ENCODE measurements at regions of chr1 and their contacts with region 1.

Region 1: GRCh38 chr1:164716992-164717703 is 158.2 kb downstream of the PBX1 start:
- DNase-seq: no peak
- ATAC-seq: no peak
- H3K4me3 ChIP-seq: no peak overlapping the region
- H3K27ac ChIP-seq: no peak overlapping the region
- H3K4me1 ChIP-seq: no peaks in the 10 kb centered on the region
- H3K27me3 ChIP-seq: no peaks in the 10 kb centered on the region; the same call in 1 of the 2 replicates
- CTCF ChIP-seq: no peak

Region 2: GRCh38 chr1:164755695-164756094 is 38.5 kb after region 1 on chr1:
- CTCF ChIA-PET with region 1: no interaction called
- POLR2A ChIA-PET with region 1: interaction called, 13 read pairs
- in situ Hi-C with region 1: no loop called
- intact Hi-C with region 1: no loop called
- DNase-seq: no peak
- ATAC-seq: no peak
- H3K4me3 ChIP-seq: no peak overlapping the region
- H3K27ac ChIP-seq: no peak overlapping the region
- H3K4me1 ChIP-seq: no peaks in the 10 kb centered on the region
- H3K27me3 ChIP-seq: no peaks in the 10 kb centered on the region
- CTCF ChIP-seq: no peak